Heart right ventricle (tissue), 16 donors: ENCODE measurements at regions of chr2 and their contacts with region 1.

Region 1: DNA sequence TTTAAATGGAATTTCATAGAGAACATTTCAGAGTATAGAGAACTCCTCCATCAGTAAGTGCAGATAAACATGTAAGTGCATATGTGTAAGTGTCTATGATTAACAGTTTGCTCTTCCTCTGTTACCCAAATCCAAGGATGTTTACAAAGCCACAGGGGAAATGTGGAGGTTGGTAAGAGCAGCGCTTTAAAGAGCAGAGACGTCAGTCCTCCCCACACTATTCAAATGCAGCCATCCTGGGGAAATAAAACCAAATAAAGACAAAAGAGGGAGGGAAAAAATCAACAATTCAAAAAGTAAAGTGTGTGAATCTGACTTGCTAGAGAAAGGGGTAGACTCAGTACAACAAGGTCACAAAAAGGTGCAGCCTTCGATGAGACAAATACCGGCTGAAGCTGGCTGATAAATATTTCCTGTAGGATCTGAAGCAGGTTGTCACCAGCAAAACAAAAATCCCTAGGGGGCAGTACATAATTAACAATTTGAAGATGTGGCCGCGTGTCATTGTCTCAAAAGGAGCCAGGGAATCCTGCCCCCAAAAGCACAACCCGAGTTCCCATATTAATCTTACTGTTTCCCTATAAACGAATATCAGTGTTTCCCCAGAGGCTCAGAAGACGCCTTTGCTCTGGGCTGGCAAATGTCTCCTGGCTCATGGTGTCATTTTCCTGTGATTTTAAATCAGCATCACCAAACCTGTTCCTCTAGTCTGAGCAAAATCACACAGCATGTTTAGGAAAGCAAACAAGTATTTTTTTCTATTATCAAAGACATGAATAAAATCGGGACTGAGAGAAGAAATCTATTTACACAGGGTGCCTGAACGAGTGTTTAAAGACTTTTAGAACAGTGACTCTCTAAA is 216.6 kb downstream of the CDCA7 start:
- DNase-seq: no peak
- ATAC-seq: peak in 4 of 8 donors; percentile 35 to 69 (median 41)
- H3K4me3 ChIP-seq: peak overlapping the region in 1 of 10 donors; percentile 3
- H3K27ac ChIP-seq: no peak overlapping the region
- H3K4me1 ChIP-seq: peaks cover 0 to 16% (median 6%) of the 10 kb centered on the region in 9 donors
- H3K27me3 ChIP-seq: peaks cover 0 to 14% (median 0%) of the 10 kb centered on the region in 7 donors
- CTCF ChIP-seq: peak in 7 of 9 donors; percentile 6 to 55 (median 49)

Region 2: DNA sequence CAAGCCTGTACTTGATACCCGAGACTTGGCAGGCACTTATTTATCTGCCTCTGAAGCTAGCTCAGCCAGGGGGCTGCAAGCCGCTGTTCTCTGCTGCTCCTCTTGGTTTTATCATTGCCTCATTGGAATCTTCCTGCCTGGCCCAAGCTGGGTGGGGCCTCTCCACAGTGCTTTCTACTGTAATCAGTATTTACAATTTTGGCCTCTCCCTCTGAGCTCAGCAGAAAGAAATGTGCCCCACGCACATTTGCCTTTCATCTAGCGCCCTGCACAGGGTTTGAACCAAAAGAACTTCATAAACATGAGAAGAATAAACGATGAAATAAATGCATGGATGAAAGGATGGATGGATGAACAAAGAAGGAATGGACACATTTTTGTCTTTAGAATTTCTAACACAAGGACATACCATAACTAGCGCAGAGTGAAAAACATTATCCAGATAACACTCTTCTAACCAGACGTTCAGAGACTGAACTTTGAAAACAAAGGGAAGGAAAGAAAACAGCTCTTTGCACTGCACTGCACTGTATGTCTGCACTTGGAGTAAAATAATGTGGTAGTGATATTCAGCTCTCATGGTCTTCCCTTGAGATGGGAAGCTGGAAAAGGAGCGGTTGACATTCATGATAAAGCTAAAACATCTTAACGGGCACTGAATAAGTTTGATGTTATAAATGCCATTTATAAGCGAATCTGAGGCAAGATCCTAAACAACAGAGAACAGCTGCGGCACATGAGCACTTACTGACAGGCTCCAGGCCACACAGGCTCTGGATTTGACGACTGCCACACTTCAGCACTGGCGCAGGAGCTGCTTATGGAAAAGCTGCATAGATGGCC is 480.7 kb after region 1 on chr2:
- intact Hi-C with region 1: loop called in 2 of 10 experiments (anchors 5 to 10 kb)
- DNase-seq: no peak
- ATAC-seq: peak; percentile 70 to 93 (median 80)
- H3K4me3 ChIP-seq: peak overlapping the region in 1 of 10 donors; percentile 3
- H3K27ac ChIP-seq: peak overlapping the region in 5 of 10 donors; percentile 16 to 47 (median 39)
- H3K4me1 ChIP-seq: peaks cover 0 to 30% (median 16%) of the 10 kb centered on the region in 9 donors
- H3K27me3 ChIP-seq: no peaks in the 10 kb centered on the region
- CTCF ChIP-seq: peak in 3 of 9 donors; percentile 10 to 16 (median 15)